ENCODE measurements at regions of chr20 and their contacts with region 1.

Region 1: DNA sequence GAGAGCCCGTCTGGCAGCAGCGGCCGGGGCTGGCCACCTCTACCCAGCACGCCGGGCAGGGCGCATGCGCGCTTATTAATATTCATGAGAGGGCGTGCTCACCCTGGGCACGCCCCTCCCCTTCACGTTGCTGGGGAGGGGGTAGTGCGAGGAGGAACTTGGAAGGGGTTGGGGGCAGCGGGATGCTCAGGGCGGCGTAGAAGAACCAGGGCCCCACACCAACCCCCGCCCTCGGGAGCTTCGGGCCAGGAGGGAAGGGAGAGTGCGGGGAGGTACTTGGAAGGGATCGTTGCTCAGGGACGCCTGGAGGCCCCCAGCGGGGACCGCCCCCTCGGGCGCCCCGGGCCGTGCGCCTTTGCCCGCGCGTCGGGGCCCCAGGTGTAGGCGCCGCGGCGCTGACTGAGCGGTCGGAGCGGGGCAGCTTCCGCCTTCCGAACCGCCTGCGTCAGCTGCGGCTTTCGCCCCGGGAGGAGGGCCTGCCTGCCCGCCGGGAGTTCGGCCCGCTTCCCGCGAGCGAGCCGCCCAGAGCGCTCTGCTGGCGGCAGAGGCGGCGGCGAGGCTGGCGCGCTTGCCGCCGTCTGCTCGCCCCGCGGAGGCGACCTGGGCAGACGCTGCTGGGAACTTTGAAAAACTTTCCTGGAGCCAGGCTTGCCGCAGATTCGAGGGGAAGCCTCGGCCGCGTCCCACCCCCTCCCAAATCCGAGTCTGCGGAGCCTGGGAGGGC is at the start of gene JAG1:
- DNase-seq: peak; percentile 82 to 98
- H3K4me3 ChIP-seq: peak within 1 kb of the TSS; percentile 86 to 90
- H3K27ac ChIP-seq: peak within 1 kb of the TSS; percentile 100
- H3K4me1 ChIP-seq: peaks cover 0 to 9% of the 10 kb centered on the region in 2 donors
- H3K27me3 ChIP-seq: no peaks in the 10 kb centered on the region
- CTCF ChIP-seq: no peak
- total RNA-seq, gene JAG1: 101 TPM

Region 2: DNA sequence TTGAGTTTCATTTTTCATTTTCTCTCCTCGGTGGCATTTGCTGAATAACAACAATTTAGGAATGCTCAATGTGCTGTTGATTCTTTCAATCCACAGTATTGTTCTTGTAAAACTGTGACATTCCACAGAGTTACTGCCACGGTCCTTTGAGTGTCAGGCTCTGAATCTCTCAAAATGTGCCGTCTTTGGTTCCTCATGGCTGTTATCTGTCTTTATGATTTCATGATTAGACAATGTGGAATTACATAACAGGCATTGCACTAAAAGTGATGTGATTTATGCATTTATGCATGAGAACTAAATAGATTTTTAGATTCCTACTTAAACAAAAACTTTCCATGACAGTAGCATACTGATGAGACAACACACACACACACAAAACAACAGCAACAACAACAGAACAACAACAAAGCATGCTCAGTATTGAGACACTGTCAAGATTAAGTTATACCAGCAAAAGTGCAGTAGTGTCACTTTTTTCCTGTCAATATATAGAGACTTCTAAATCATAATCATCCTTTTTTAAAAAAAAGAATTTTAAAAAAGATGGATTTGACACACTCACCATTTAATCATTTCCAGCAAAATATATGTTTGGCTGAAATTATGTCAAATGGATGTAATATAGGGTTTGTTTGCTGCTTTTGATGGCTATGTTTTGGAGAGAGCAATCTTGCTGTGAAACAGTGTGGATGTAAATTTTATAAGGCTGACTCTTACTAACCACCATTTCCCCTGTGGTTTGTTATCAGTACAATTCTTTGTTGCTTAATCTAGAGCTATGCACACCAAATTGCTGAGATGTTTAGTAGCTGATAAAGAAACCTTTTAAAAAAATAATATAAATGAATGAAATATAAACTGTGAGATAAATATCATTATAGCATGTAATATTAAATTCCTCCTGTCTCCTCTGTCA is 367.5 kb before region 1 on chr20:
- intact Hi-C with region 1: loop called (anchors 10 kb)
- DNase-seq: no peak
- H3K4me3 ChIP-seq: no peak overlapping the region
- H3K27ac ChIP-seq: peak overlapping the region; percentile 8 to 12
- H3K4me1 ChIP-seq: peaks cover 4 to 21% of the 10 kb centered on the region in 2 donors
- H3K27me3 ChIP-seq: no peaks in the 10 kb centered on the region
- CTCF ChIP-seq: no peak

Region 3: GRCh38 chr20:10511509-10512251 is 162.5 kb before region 1 on chr20:
- intact Hi-C with region 1: loop called (anchors 5 kb)
- DNase-seq: peak; percentile 76 to 95
- H3K4me3 ChIP-seq: no peak overlapping the region
- H3K27ac ChIP-seq: peak overlapping the region; percentile 66 to 77
- H3K4me1 ChIP-seq: peaks cover 16 to 35% of the 10 kb centered on the region in 2 donors
- H3K27me3 ChIP-seq: no peaks in the 10 kb centered on the region
- CTCF ChIP-seq: no peak

Region 4: GRCh38 chr20:10654630-10655029 is 19.5 kb before region 1 on chr20:
- intact Hi-C with region 1: loop called (anchors 2 kb)
- DNase-seq: no peak
- H3K4me3 ChIP-seq: peak overlapping the region in 1 of 2 donors; percentile 54
- H3K27ac ChIP-seq: peak overlapping the region; percentile 93 to 100
- H3K4me1 ChIP-seq: peaks cover 28 to 96% of the 10 kb centered on the region in 2 donors
- H3K27me3 ChIP-seq: no peaks in the 10 kb centered on the region
- CTCF ChIP-seq: no peak

Region 5: GRCh38 chr20:10982692-10983091 is 308.5 kb after region 1 on chr20:
- intact Hi-C with region 1: loop called (anchors 2 kb)
- DNase-seq: peak; percentile 11 to 83
- H3K4me3 ChIP-seq: peak overlapping the region in 1 of 2 donors; percentile 17
- H3K27ac ChIP-seq: peak overlapping the region; percentile 52 to 58
- H3K4me1 ChIP-seq: peaks cover 0 to 17% of the 10 kb centered on the region in 2 donors
- H3K27me3 ChIP-seq: no peaks in the 10 kb centered on the region
- CTCF ChIP-seq: no peak

Region 6: GRCh38 chr20:11274141-11274594 is 600.0 kb after region 1 on chr20:
- intact Hi-C with region 1: loop called (anchors 2 kb)
- DNase-seq: peak in 1 of 2 donors; percentile 69
- H3K4me3 ChIP-seq: no peak overlapping the region
- H3K27ac ChIP-seq: no peak overlapping the region
- H3K4me1 ChIP-seq: peaks cover 0 to 3% of the 10 kb centered on the region in 2 donors
- H3K27me3 ChIP-seq: no peaks in the 10 kb centered on the region
- CTCF ChIP-seq: peak; percentile 58 to 77 (median 58)